ENCODE measurements at regions of chr4 and their contacts with region 1.

Region 1: GRCh38 chr4:55866973-55867574 is 13.6 kb downstream of the EXOC1 start:
- DNase-seq: peak; percentile 31
- ATAC-seq: peak; percentile 93
- H3K4me3 Mint-ChIP-seq: no peak overlapping the region
- H3K27ac Mint-ChIP-seq: no peak overlapping the region
- H3K4me1 Mint-ChIP-seq: peaks cover 22% of the 10 kb centered on the region
- H3K27me3 Mint-ChIP-seq: no peaks in the 10 kb centered on the region

Region 2: GRCh38 chr4:55853484-55854046 is 13.5 kb before region 1 on chr4 and contains the start of gene EXOC1:
- CTCF ChIA-PET with region 1: interaction called, 12 read pairs
- POLR2A ChIA-PET with region 1: interaction called, 8 read pairs
- DNase-seq: peak; percentile 98
- ATAC-seq: peak; percentile 96
- H3K4me3 Mint-ChIP-seq: peak within 1 kb of the TSS; percentile 14
- H3K27ac Mint-ChIP-seq: peak within 1 kb of the TSS; percentile 89
- H3K4me1 Mint-ChIP-seq: peaks cover 35% of the 10 kb centered on the region
- H3K27me3 Mint-ChIP-seq: no peaks in the 10 kb centered on the region
- total RNA-seq, gene EXOC1: 22.8 to 23.3 TPM